Activated CD8-positive, alpha-beta memory T cell treated with anti-CD3 and anti-CD28 coated beads, Interleukin-2, amount 10 ng/mL, durations not matched to agents 7 days and 5 days (primary cell): ENCODE measurements at regions of chr10 and their contacts with region 1.

Region 1: GRCh38 chr10:128035557-128035973 is 90.7 kb downstream of the MKI67 start:
- DNase-seq: peak; percentile 71
- ATAC-seq: peak; percentile 89
- H3K4me3 Mint-ChIP-seq: no peak overlapping the region
- H3K27ac Mint-ChIP-seq: no peak overlapping the region
- H3K4me1 Mint-ChIP-seq: peaks cover 2% of the 10 kb centered on the region
- H3K27me3 Mint-ChIP-seq: peaks cover 5% of the 10 kb centered on the region

Region 2: GRCh38 chr10:127991543-127992255 is 43.9 kb before region 1 on chr10:
- CTCF ChIA-PET with region 1: no interaction called
- DNase-seq: no peak
- ATAC-seq: no peak
- H3K4me3 Mint-ChIP-seq: no peak overlapping the region
- H3K27ac Mint-ChIP-seq: no peak overlapping the region
- H3K4me1 Mint-ChIP-seq: peaks cover 35% of the 10 kb centered on the region
- H3K27me3 Mint-ChIP-seq: peaks cover 11% of the 10 kb centered on the region

Region 3: GRCh38 chr10:128047351-128047750 is 11.8 kb after region 1 on chr10:
- CTCF ChIA-PET with region 1: interaction called, 47 read pairs
- DNase-seq: peak; percentile 93
- ATAC-seq: peak; percentile 99
- H3K4me3 Mint-ChIP-seq: peak overlapping the region; percentile 79
- H3K27ac Mint-ChIP-seq: peak overlapping the region; percentile 91
- H3K4me1 Mint-ChIP-seq: peaks cover 51% of the 10 kb centered on the region
- H3K27me3 Mint-ChIP-seq: no peaks in the 10 kb centered on the region

Region 4: DNA sequence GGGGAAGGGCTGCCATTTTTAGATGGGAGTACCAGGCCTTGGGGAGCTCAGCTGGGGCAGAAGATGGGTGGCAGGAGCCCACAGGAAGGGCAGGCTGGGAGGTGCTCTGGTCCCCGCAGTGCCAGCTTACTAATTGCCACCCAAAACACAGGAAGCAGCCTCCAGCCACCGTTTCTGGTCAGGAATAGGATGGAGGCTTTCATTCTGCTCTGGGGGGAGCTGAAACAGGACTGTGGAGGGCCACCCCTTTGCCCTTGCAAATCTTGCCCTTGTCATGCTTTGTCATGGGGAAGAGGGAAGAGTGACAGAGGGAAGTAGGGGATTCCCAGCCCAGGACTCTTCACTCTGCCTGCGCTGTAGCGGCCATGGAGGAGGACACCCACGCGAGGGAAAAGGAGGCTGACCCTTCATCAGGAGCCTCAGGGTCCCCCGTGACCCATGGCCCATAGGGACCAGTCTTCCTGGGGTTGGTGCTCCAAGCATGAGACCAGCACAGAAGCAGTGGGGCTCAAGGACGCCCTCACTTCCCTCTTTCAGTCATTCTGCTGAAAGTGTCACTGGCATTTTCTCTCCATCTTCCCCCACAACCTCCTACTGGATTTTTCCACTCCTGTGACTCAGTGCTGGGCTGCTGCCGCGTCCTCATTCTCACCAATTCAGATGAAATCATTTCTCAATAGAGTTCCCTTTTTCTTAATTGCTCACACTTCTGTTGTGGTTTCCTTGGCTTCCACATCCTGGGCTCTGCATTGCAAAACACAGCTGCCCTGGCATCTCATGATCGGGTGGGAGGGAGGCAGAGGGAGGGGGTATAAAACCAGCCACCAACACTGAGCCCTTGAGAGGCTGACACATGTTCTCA is 28.8 kb after region 1 on chr10:
- CTCF ChIA-PET with region 1: interaction called, 185 read pairs
- DNase-seq: peak; percentile 78
- ATAC-seq: peak; percentile 50
- H3K4me3 Mint-ChIP-seq: peak overlapping the region; percentile 42
- H3K27ac Mint-ChIP-seq: peak overlapping the region; percentile 82
- H3K4me1 Mint-ChIP-seq: peaks cover 55% of the 10 kb centered on the region
- H3K27me3 Mint-ChIP-seq: no peaks in the 10 kb centered on the region

Region 5: GRCh38 chr10:128078136-128078969 is 42.8 kb after region 1 on chr10:
- CTCF ChIA-PET with region 1: interaction called, 185 read pairs
- DNase-seq: peak; percentile 61
- ATAC-seq: peak; percentile 75
- H3K4me3 Mint-ChIP-seq: no peak overlapping the region
- H3K27ac Mint-ChIP-seq: no peak overlapping the region
- H3K4me1 Mint-ChIP-seq: peaks cover 13% of the 10 kb centered on the region
- H3K27me3 Mint-ChIP-seq: no peaks in the 10 kb centered on the region